Head of caudate nucleus (tissue), 42 donors: ENCODE measurements at regions of chr12 and their contacts with region 1.

Region 1: DNA sequence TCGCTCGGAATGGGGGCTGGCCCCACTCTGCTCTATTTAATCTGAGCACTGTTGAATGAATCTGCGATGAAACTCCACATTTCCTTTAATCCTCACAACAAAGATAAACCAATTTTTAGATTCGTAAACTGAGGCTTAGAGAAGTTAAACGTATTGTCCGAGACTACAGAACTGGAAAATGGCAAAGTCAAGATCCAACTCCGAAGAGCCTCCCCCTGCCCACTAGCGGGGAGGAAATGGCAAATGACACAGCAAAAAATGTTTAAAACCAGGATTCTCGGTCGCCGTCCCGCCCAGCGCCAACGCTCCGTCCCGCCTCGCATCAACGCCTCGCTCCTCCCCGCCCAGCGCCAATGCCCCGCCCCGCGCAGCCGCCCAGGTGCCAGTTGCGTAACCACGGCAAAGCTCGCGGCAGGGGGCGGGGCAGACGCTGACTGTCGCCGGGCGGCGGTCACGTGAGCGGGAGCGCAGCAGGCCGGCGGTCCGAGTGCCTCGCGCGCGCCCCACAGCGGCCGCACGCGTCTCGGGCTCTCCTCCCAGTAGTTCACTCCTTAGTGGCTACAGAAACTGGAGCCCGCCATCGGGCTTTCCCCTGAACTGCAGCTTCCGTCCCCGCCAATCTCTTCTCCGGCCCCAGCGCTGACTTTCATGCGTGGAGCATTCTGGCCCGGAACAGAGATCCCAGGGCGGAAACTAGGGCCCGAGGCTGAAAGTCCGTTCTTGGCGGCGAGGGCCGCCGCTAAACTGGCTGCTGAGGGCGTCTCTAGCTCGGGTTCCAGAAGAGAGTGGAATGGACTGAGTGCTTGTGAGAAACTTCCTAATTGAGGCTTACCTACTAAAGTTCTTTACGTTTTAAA is 13.6 kb upstream of the LRRC23 start:
- DNase-seq: peak; percentile 96 to 100 (median 99)

Region 2: GRCh38 chr12:6851921-6852650 is 38.9 kb before region 1 on chr12 and contains the start of gene USP5:
- intact Hi-C with region 1: loop called (anchors 2 kb)
- DNase-seq: peak; percentile 97 to 100 (median 100)

Region 3: GRCh38 chr12:6873094-6874014 is 17.7 kb before region 1 on chr12 and contains the start of gene SPSB2:
- intact Hi-C with region 1: loop called (anchors 2 kb)
- DNase-seq: peak; percentile 85 to 98 (median 96)

Region 4: DNA sequence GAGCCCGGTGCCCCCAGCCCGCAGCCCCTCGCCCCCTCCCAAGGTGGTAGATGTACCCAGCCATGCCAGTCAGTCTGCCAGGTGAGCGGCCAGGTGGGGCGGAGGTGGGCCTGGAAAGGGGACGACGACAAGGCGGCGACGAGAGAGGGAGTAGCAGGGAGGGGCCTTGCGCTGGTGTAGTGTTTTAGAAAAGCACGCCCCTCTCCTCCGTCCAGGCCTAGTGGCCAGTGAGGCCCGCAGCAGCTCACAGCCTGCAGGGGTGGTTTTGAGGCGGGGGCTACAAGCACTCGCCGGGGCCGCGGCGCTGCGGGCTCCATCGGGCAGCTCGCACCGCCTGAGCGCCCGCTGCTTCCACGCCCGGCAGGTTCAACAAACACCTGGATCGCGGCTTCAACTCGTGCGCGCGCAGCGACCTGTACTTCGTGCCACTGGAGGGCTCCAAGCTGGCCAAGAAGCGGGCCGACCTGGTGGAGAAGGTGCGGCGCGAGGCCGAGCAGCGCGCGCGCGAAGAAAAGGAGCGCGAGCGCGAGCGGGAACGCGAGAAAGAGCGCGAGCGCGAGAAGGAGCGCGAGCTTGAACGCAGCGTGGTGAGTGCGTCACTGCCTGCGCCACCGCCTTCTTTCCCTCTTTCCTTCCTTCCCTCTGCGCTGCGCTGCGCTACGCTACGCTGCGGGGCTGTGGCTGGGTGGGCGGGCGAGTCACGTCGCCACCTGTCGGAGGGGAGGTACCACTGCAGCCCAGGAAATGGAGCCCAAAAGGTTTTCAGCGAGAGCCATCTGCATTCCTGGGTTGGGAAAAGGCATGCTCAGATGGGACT is 46.7 kb after region 1 on chr12:
- intact Hi-C with region 1: no loop called
- DNase-seq: peak; percentile 88 to 98 (median 94)

Region 5: DNA sequence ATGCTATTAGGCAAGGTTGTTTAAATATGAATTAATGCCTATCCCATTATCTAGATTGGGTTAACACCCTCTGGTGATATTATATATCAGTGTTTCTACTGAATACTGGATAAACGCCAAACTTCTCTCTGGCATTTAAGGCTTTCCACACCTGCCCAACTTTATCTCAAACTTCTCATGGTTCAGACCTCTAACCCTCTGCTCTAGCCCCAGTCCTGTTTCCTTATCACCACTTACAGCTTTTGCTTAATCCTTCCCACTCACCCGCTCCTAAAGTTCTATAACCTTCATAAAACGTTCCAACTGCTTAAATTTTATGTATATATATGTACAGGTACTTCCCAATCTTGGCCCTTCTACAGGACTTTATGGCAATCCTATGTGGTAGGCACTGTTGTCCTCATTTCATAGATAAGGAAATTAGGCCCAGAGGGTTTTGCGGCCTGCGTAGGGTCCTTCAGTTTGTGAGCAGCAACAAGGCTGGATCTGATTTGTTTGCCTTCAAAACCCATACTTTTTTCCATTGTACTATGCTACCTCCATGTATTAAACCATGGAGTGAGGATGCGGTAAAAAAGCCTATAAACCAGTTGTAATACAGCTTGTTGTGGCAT is 126.0 kb after region 1 on chr12:
- intact Hi-C with region 1: no loop called
- DNase-seq: no peak